ENCODE measurements at regions of chr2 and their contacts with region 1.

Region 1: GRCh38 chr2:118855451-118856279 is 8.2 kb upstream of the EN1 start:
- DNase-seq: peak; percentile 91
- H3K4me3 ChIP-seq: peak overlapping the region; percentile 37
- H3K27ac ChIP-seq: no peak overlapping the region
- H3K4me1 ChIP-seq: peaks cover 7% of the 10 kb centered on the region
- H3K27me3 ChIP-seq: peaks cover 99% of the 10 kb centered on the region
- CTCF ChIP-seq: peak; percentile 95

Region 2: DNA sequence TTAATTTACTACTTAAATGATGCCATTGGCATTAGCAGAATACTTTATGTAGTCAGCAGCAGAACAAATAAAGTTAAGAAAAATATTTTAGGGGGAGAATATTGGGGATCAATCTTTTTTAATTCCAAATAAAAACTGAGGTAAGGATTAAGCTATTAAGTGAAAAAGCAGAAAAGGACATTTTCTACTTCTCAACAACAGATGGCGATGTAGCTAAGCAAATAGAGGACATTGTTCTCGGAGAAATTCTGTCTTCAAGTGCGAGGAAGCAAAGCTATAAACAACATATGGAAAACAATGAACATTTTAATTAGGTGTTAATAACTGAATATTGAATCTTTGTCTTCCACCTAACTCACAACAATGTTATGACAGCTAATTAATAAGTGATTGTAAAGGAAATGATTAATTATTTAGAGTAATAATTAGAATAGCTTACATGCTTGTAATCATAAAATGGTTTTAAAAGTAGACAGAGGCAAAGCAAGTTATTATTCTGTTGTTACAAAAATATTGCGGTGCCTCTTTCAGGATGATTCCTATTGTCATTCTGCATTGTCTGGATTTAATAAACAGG is 808.9 kb before region 1 on chr2:
- CTCF ChIA-PET with region 1: interaction called, 11 read pairs
- POLR2A ChIA-PET with region 1: no interaction called
- intact Hi-C with region 1: loop called (anchors 5 kb)
- DNase-seq: peak; percentile 58
- H3K4me3 ChIP-seq: no peak overlapping the region
- H3K27ac ChIP-seq: no peak overlapping the region
- H3K4me1 ChIP-seq: peaks cover 21% of the 10 kb centered on the region
- H3K27me3 ChIP-seq: no peaks in the 10 kb centered on the region
- CTCF ChIP-seq: peak; percentile 69

Region 3: GRCh38 chr2:118221666-118222594 is 633.7 kb before region 1 on chr2:
- CTCF ChIA-PET with region 1: interaction called, 4 read pairs
- POLR2A ChIA-PET with region 1: no interaction called
- intact Hi-C with region 1: loop called (anchors 2 kb)
- DNase-seq: peak; percentile 71
- H3K4me3 ChIP-seq: no peak overlapping the region
- H3K27ac ChIP-seq: no peak overlapping the region
- H3K4me1 ChIP-seq: peaks cover 19% of the 10 kb centered on the region
- H3K27me3 ChIP-seq: peaks cover 13% of the 10 kb centered on the region
- CTCF ChIP-seq: peak; percentile 77

Region 4: GRCh38 chr2:118371515-118371914 is 484.1 kb before region 1 on chr2:
- CTCF ChIA-PET with region 1: interaction called, 3 read pairs
- POLR2A ChIA-PET with region 1: no interaction called
- intact Hi-C with region 1: loop called (anchors 10 kb)
- DNase-seq: peak; percentile 9
- H3K4me3 ChIP-seq: no peak overlapping the region
- H3K27ac ChIP-seq: no peak overlapping the region
- H3K4me1 ChIP-seq: no peaks in the 10 kb centered on the region
- H3K27me3 ChIP-seq: no peaks in the 10 kb centered on the region
- CTCF ChIP-seq: peak; percentile 34; the same call in 1 of the 2 replicates

Region 5: DNA sequence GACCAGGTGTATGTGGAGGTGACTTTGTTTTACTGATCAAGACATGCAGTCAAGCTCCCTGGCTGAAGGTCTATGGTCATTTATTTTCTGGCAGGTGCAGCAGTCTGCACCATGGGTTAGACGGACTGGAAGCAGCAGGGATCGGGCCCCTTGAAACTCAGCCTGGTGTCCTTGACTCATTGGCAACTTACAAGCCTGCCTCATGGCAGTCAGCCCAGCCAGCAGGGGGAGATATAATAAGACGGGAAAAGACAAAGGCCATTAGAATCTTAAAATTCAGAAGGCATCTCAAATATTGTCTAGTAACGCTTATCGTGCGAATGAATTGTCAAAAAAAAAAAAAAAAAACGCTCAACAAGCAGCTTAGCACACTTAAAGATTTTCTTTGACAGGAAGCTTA is 316.4 kb before region 1 on chr2:
- CTCF ChIA-PET with region 1: interaction called, 3 read pairs
- POLR2A ChIA-PET with region 1: no interaction called
- intact Hi-C with region 1: loop called (anchors 5 kb)
- DNase-seq: peak; percentile 24
- H3K4me3 ChIP-seq: no peak overlapping the region
- H3K27ac ChIP-seq: no peak overlapping the region
- H3K4me1 ChIP-seq: no peaks in the 10 kb centered on the region
- H3K27me3 ChIP-seq: no peaks in the 10 kb centered on the region
- CTCF ChIP-seq: peak; percentile 52

Region 6: DNA sequence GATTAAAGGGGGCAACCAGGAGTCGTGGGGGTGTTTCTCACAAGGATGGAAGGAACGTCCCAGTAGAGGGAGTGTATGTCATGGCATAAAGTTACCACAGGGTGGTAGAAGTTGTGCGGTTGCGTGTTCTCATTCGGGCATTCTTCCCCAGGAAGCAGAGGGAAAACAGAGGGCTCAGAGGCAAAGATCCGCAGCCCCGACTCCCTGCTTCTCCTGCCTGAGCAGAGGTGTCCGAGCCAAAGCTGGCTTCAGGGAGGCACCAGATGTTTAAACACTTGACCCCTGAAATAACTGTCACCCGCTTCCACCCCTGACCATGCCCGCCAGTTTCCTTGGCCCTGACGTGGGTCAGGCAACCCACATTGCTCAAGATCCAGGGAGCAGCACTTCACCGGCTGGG is 91.9 kb before region 1 on chr2:
- CTCF ChIA-PET with region 1: no interaction called
- POLR2A ChIA-PET with region 1: no interaction called
- intact Hi-C with region 1: loop called (anchors 1 kb)
- DNase-seq: peak; percentile 34
- H3K4me3 ChIP-seq: no peak overlapping the region
- H3K27ac ChIP-seq: no peak overlapping the region
- H3K4me1 ChIP-seq: no peaks in the 10 kb centered on the region
- H3K27me3 ChIP-seq: peaks cover 29% of the 10 kb centered on the region
- CTCF ChIP-seq: peak; percentile 51; the same call in 1 of the 2 replicates